ENCODE measurements at regions of chr13 and their contacts with region 1.

Region 1: GRCh38 chr13:108895220-108895704 is 265.9 kb downstream of the MYO16 start:
- DNase-seq: no peak
- H3K4me3 ChIP-seq: no peak overlapping the region
- H3K27ac ChIP-seq: no peak overlapping the region
- H3K4me1 ChIP-seq: no peaks in the 10 kb centered on the region
- H3K27me3 ChIP-seq: no peaks in the 10 kb centered on the region
- CTCF ChIP-seq: peak in 3 of 4 experiments; percentile 39 to 53 (median 48)
- EP300 ChIP-seq: no peak
- POLR2A ChIP-seq: no peak

Region 2: DNA sequence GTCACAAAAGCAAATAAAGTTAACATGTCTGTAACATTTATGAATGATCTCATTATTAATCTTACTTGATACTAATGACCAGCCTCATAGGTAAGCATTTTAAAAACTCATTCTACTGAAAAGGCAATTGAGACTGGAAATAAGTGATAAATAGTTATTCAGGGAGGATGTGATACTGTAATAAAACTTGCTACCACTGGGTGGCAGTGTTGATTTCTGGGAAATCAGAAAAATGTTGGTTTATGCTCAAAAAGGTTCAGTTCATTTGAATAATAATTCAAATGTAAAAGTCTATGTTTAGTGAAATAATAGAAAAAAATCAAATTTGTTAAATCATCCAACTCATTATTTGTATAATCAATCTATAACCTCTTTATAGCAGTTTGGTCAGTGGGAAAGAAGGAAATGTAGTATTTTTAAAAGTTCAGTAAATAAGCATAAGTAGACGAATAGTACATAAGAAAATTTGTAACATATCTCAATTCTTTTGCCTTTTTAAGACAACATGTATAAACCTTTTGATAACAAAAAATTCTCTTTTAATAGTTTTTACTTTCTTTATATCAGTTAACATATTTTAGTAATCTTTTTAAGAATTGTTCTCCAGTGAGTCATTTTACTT is 667.5 kb before region 1 on chr13:
- intact Hi-C with region 1: loop called (anchors 10 kb)
- DNase-seq: no peak
- H3K4me3 ChIP-seq: no peak overlapping the region
- H3K27ac ChIP-seq: no peak overlapping the region
- H3K4me1 ChIP-seq: peaks cover 0 to 30% (median 21%) of the 10 kb centered on the region in 4 donors
- H3K27me3 ChIP-seq: no peaks in the 10 kb centered on the region
- CTCF ChIP-seq: peak; percentile 26 to 71 (median 67)
- EP300 ChIP-seq: no peak
- POLR2A ChIP-seq: no peak

Region 3: DNA sequence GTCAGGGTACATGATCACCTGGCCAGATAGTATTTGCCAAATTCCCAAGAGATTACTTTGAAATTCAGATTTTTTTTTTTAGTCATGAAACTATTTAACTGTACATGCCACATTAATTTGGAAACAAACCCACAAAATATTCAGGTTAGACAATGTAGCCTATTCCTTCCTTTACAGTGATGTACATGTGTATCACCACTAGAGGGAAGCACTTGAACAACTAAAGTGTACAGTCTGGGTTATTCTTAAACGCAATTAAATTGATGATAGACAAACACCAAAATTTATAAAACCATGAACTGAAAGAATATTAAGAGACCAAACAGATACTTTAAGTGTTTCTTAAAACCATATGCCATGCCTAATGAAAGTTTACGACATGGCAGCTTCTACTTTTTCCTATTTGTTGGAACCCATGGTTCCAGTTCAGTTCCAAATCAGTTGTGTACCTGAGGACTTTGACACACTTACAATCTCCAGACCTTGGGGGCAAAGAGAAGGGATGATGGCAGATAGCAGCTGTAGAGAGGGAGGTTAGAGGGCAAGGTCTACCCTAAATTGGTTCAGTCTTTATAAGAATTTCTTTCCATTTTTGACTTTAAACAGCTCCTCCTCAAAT is 572.9 kb before region 1 on chr13:
- intact Hi-C with region 1: loop called (anchors 5 kb)
- DNase-seq: no peak
- H3K4me3 ChIP-seq: no peak overlapping the region
- H3K27ac ChIP-seq: no peak overlapping the region
- H3K4me1 ChIP-seq: no peaks in the 10 kb centered on the region
- H3K27me3 ChIP-seq: no peaks in the 10 kb centered on the region
- CTCF ChIP-seq: peak in 3 of 4 experiments; percentile 59 to 78 (median 60)
- EP300 ChIP-seq: no peak
- POLR2A ChIP-seq: no peak

Region 4: GRCh38 chr13:108609353-108609752 is 285.9 kb before region 1 on chr13:
- intact Hi-C with region 1: loop called (anchors 5 kb)
- DNase-seq: no peak
- H3K4me3 ChIP-seq: no peak overlapping the region
- H3K27ac ChIP-seq: no peak overlapping the region
- H3K4me1 ChIP-seq: no peaks in the 10 kb centered on the region
- H3K27me3 ChIP-seq: no peaks in the 10 kb centered on the region
- CTCF ChIP-seq: peak in 1 of 4 experiments; percentile 41
- EP300 ChIP-seq: no peak
- POLR2A ChIP-seq: no peak

Measured in sigmoid colon (tissue), 7 donors.